ENCODE measurements at regions of chr1 and their contacts with region 1.

Region 1: DNA sequence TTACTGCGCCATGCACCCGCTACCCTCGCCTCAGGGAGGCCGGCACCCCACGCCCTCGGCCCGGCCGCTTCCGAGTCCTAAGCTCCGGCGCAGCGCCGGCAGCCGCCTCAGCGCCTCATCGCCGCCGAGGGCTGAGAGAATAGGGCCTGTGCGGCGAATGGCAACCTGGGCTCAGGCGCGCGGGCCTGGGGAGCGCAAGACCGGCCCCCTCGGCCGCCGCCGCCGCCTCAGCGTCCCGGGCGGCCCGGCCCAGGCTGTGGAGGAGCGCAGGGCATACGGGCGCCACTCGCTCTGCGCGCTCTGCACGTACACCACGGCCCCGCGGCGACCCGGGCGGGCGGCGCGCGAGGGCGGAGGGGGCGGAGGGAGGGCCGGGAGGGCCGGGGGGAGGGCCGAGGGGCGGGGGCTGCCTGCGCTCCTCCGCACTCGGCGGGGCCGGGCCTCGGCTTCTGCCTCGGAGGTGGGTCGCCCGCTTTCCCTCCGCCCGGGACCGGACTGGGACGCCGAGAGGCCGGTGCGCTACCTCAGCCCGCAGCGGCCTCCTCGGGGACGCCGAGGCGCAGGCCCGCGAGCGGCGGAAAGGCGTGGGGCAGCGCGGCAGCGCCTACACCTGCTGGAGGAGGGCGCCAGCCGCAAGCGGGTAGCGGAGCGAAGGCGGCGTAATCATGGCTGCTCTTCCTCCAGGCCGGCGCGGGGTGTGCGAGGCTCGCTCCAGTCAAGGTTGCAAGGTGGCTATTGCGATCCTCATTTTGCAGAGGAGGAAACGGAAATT is at the start of gene EGLN1:
- DNase-seq: peak; percentile 91
- H3K4me3 ChIP-seq: peak within 1 kb of the TSS; percentile 80
- H3K27ac ChIP-seq: peak within 1 kb of the TSS; percentile 90
- H3K4me1 ChIP-seq: peaks cover 27% of the 10 kb centered on the region
- H3K27me3 ChIP-seq: no peaks in the 10 kb centered on the region
- CTCF ChIP-seq: peak; percentile 35
- total RNA-seq, gene EGLN1: 29.5 and 30.4 TPM in 2 replicates

Region 2: DNA sequence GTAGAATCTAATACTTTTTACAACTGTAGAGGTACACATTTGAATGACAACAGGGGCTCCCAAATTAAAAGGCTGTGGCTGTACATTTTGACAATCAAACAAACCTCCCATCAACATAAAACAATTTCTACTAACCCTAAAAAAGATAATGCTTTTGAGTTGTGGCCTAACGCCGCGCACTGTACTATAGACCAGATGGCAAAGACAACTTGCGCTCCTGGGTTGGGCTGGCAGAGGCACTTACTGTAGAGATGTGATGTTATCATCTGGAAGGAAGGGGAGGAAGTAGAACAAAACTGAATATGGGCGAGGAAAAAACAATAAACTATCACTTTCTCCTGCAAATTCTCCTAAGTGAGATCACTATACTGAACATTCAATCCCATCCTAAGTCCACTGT is 58.0 kb before region 1 on chr1:
- CTCF ChIA-PET with region 1: no interaction called
- POLR2A ChIA-PET with region 1: no interaction called
- intact Hi-C with region 1: loop called (anchors 5 kb)
- DNase-seq: no peak
- H3K4me3 ChIP-seq: no peak overlapping the region
- H3K27ac ChIP-seq: no peak overlapping the region
- H3K4me1 ChIP-seq: peaks cover 11% of the 10 kb centered on the region
- H3K27me3 ChIP-seq: no peaks in the 10 kb centered on the region
- CTCF ChIP-seq: no peak